CD4-positive, alpha-beta memory T cell (primary cell): ENCODE measurements at regions of chr6 and their contacts with region 1.

Region 1: DNA sequence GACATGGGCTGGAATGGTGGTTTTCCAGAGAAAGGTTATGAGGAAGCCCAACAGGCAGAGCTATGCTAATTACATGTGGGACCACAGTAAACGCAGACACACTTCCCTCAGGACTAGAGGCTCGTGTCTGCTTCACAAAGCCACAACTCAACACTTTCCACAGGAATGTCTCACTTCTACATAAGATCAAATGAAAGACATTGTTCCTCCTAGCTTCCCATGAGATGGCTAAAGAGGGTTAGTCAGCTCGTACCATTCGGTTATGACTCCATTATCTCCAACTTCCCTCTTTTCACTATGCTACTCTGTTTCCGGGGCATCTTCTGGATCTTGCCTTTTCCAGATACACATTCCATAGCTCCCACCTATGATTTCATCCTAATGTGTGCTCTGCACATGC is 29.1 kb upstream of the ZC3H12D start:
- DNase-seq: no peak
- H3K4me3 ChIP-seq: no peak overlapping the region
- H3K4me3 Mint-ChIP-seq: no peak overlapping the region
- H3K27ac ChIP-seq: no peak overlapping the region
- H3K27ac Mint-ChIP-seq: peak overlapping the region in 5 of 7 donors; percentile 36 to 85 (median 36)
- H3K4me1 ChIP-seq: peaks cover 18% of the 10 kb centered on the region
- H3K4me1 Mint-ChIP-seq: peaks cover 16 to 45% (median 17%) of the 10 kb centered on the region in 4 donors
- H3K27me3 ChIP-seq: no peaks in the 10 kb centered on the region
- H3K27me3 Mint-ChIP-seq: no peaks in the 10 kb centered on the region

Region 2: GRCh38 chr6:149082286-149082707 is 431.6 kb before region 1 on chr6:
- CTCF ChIA-PET with region 1: interaction called, 13 read pairs
- POLR2A ChIA-PET with region 1: no interaction called
- intact Hi-C with region 1: loop called (anchors 1 kb)
- DNase-seq: peak; percentile 76 to 86 (median 77)
- H3K4me3 ChIP-seq: no peak overlapping the region
- H3K4me3 Mint-ChIP-seq: peak overlapping the region in 4 of 8 donors; percentile 0 to 46 (median 25)
- H3K27ac ChIP-seq: no peak overlapping the region
- H3K27ac Mint-ChIP-seq: peak overlapping the region in 4 of 7 donors; percentile 12 to 85 (median 68)
- H3K4me1 ChIP-seq: peaks cover 40% of the 10 kb centered on the region
- H3K4me1 Mint-ChIP-seq: peaks cover 31 to 50% (median 38%) of the 10 kb centered on the region in 4 donors
- H3K27me3 ChIP-seq: no peaks in the 10 kb centered on the region
- H3K27me3 Mint-ChIP-seq: no peaks in the 10 kb centered on the region

Region 3: GRCh38 chr6:149284904-149285303 is 229.0 kb before region 1 on chr6:
- CTCF ChIA-PET with region 1: no interaction called
- POLR2A ChIA-PET with region 1: no interaction called
- intact Hi-C with region 1: no loop called
- DNase-seq: no peak
- H3K4me3 ChIP-seq: no peak overlapping the region
- H3K4me3 Mint-ChIP-seq: no peak overlapping the region
- H3K27ac ChIP-seq: no peak overlapping the region
- H3K27ac Mint-ChIP-seq: peak overlapping the region in 1 of 7 donors; percentile 68
- H3K4me1 ChIP-seq: no peaks in the 10 kb centered on the region
- H3K4me1 Mint-ChIP-seq: peaks cover 0 to 11% (median 5%) of the 10 kb centered on the region in 4 donors
- H3K27me3 ChIP-seq: no peaks in the 10 kb centered on the region
- H3K27me3 Mint-ChIP-seq: no peaks in the 10 kb centered on the region

Region 4: DNA sequence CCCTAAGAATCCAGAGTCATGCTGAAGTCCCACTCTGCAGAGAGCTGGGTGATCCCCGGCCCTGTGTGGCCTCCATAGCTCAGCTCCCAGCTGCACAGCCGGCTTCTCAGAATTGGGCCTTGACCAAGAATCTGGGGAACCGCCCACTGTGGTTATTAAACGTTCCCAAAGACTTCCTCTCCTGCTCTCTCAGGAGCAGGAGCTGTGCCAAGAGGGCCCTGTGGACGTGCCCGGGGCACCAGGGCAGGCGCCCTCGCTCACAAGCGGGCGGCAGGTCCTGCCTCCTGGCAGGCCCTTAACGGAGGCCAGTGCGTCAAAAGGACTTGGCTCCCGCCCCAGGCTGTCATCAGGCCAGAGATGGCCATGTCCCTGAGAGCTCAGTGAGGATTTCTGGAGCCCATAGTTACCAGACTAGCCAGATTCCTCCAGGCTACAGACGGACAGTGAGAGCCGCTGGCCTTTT is 59.5 kb before region 1 on chr6:
- CTCF ChIA-PET with region 1: interaction called, 18 read pairs
- POLR2A ChIA-PET with region 1: no interaction called
- intact Hi-C with region 1: loop called (anchors 5 kb)
- DNase-seq: no peak
- H3K4me3 ChIP-seq: no peak overlapping the region
- H3K4me3 Mint-ChIP-seq: no peak overlapping the region
- H3K27ac ChIP-seq: no peak overlapping the region
- H3K27ac Mint-ChIP-seq: peak overlapping the region in 1 of 7 donors; percentile 71
- H3K4me1 ChIP-seq: no peaks in the 10 kb centered on the region
- H3K4me1 Mint-ChIP-seq: peaks cover 7 to 18% (median 12%) of the 10 kb centered on the region in 4 donors
- H3K27me3 ChIP-seq: no peaks in the 10 kb centered on the region
- H3K27me3 Mint-ChIP-seq: no peaks in the 10 kb centered on the region

Region 5: GRCh38 chr6:149473080-149474052 is 40.5 kb before region 1 on chr6:
- CTCF ChIA-PET with region 1: interaction called, 45 read pairs
- POLR2A ChIA-PET with region 1: interaction called, 14 read pairs
- intact Hi-C with region 1: no loop called
- DNase-seq: peak in 4 of 5 donors; percentile 38 to 58 (median 48)
- H3K4me3 ChIP-seq: no peak overlapping the region
- H3K4me3 Mint-ChIP-seq: peak overlapping the region; percentile 59 to 83 (median 68)
- H3K27ac ChIP-seq: peak overlapping the region; percentile 40
- H3K27ac Mint-ChIP-seq: peak overlapping the region; percentile 84 to 92 (median 88)
- H3K4me1 ChIP-seq: peaks cover 93% of the 10 kb centered on the region
- H3K4me1 Mint-ChIP-seq: peaks cover 49 to 85% (median 71%) of the 10 kb centered on the region in 4 donors
- H3K27me3 ChIP-seq: no peaks in the 10 kb centered on the region
- H3K27me3 Mint-ChIP-seq: no peaks in the 10 kb centered on the region

Region 6: DNA sequence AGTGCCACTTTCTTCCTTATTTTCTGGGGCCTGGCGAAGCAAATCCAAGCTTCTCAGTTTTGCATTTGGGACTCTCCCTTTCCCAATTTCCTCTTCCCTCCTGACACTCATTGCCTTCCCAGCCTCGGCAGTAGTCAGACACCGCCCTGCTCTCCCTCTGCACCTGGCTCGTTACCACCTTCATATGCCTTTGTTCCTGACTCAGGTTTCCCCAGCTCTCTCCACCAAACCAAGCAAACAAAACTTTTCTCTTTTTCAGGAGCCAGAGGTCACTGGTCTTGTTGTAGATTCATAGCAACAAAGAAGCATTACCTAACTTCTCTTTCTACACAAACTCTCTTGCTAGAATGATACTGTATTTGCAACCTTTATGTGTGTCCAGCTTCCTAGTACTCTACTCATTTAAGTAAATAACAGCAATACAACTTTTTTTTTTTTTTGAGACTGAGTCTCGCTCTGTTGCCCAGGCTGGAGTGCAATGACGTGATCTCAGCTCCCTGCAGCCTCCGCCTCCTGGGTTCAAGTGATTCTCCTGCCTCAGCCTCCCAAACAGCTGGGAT is 20.1 kb before region 1 on chr6:
- CTCF ChIA-PET with region 1: interaction called, 5 read pairs
- POLR2A ChIA-PET with region 1: interaction called, 100 read pairs
- intact Hi-C with region 1: loop called (anchors 1 kb)
- DNase-seq: no peak
- H3K4me3 ChIP-seq: no peak overlapping the region
- H3K4me3 Mint-ChIP-seq: peak overlapping the region in 6 of 8 donors; percentile 4 to 87 (median 36)
- H3K27ac ChIP-seq: peak overlapping the region; percentile 94
- H3K27ac Mint-ChIP-seq: peak overlapping the region; percentile 96 to 100 (median 98)
- H3K4me1 ChIP-seq: peaks cover 56% of the 10 kb centered on the region
- H3K4me1 Mint-ChIP-seq: peaks cover 33 to 64% (median 53%) of the 10 kb centered on the region in 4 donors
- H3K27me3 ChIP-seq: no peaks in the 10 kb centered on the region
- H3K27me3 Mint-ChIP-seq: no peaks in the 10 kb centered on the region

Region 7: DNA sequence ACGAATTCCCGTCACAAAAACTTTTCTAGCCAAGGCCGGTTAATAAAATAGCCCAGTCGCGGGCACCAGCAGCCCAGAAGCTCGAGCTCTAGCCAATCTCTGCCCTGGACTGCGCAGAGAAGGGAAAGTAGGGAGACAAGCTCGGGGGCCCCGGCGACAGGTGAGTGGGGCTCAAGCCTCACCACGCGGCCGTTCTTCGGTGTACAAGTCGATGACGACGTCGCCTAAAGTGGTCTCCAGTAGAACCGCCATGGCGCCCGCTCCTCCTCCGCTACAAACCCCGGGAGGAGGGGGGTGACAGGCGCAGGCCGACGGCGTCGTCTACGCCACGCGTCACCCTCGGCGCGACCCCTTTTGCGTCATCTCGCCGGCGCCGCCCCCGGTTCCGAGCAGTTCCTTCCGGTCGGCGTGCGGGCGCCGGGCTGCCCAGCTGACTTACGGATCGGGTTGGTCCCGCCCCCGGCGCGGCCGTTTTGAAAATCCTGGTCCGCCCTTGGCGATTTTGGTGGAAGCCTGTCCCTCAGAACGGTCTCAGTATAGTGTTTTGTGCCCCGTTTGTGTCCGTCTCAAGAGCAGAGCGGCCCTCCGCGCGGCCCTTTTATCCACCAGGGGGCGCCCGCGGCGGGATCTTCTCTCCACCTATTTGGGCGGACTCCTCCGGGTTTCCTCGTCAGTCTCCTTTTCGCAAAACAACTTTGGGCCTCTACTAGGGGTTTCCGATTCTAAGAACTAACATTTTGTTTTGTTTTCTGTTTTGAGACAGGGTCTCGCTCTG is 32.0 kb after region 1 on chr6 and contains the start of gene PPIL4:
- CTCF ChIA-PET with region 1: interaction called, 10 read pairs
- POLR2A ChIA-PET with region 1: interaction called, 3 read pairs
- intact Hi-C with region 1: no loop called
- DNase-seq: peak; percentile 94 to 98 (median 97)
- H3K4me3 ChIP-seq: peak within 1 kb of the TSS; percentile 68 to 74
- H3K4me3 Mint-ChIP-seq: peak within 1 kb of the TSS; percentile 97 to 100 (median 98)
- H3K27ac ChIP-seq: peak within 1 kb of the TSS; percentile 100
- H3K27ac Mint-ChIP-seq: peak within 1 kb of the TSS; percentile 98 to 100 (median 100)
- H3K4me1 ChIP-seq: peaks cover 32% of the 10 kb centered on the region
- H3K4me1 Mint-ChIP-seq: peaks cover 27 to 50% (median 38%) of the 10 kb centered on the region in 4 donors
- H3K27me3 ChIP-seq: no peaks in the 10 kb centered on the region
- H3K27me3 Mint-ChIP-seq: peaks cover 0 to 3% of the 10 kb centered on the region in 2 donors
- total RNA-seq, gene PPIL4: 33.1 to 35.7 TPM

Region 8: GRCh38 chr6:149761438-149761837 is 247.5 kb after region 1 on chr6:
- CTCF ChIA-PET with region 1: no interaction called
- POLR2A ChIA-PET with region 1: no interaction called
- intact Hi-C with region 1: no loop called
- DNase-seq: no peak
- H3K4me3 ChIP-seq: no peak overlapping the region
- H3K4me3 Mint-ChIP-seq: no peak overlapping the region
- H3K27ac ChIP-seq: no peak overlapping the region
- H3K27ac Mint-ChIP-seq: peak overlapping the region in 1 of 7 donors; percentile 7
- H3K4me1 ChIP-seq: no peaks in the 10 kb centered on the region
- H3K4me1 Mint-ChIP-seq: peaks cover 5 to 27% (median 18%) of the 10 kb centered on the region in 4 donors
- H3K27me3 ChIP-seq: no peaks in the 10 kb centered on the region
- H3K27me3 Mint-ChIP-seq: no peaks in the 10 kb centered on the region